ENCODE measurements at regions of chr16 and their contacts with region 1.

Region 1: GRCh38 chr16:58684354-58685083 is at the start of gene SLC38A7:
- DNase-seq: peak; percentile 90 to 92 (median 91)
- ATAC-seq: peak; percentile 92 to 95 (median 94)
- H3K4me3 ChIP-seq: peak within 1 kb of the TSS; percentile 85 to 98 (median 85)
- H3K27ac ChIP-seq: peak within 1 kb of the TSS; percentile 75 to 83 (median 77)
- H3K4me1 ChIP-seq: peaks cover 0 to 11% (median 2%) of the 10 kb centered on the region in 4 donors
- H3K27me3 ChIP-seq: no peaks in the 10 kb centered on the region
- CTCF ChIP-seq: no peak
- POLR2A ChIP-seq: no peak
- total RNA-seq, gene SLC38A7: 11.4 to 23.8 (median 14.3) TPM

Region 2: DNA sequence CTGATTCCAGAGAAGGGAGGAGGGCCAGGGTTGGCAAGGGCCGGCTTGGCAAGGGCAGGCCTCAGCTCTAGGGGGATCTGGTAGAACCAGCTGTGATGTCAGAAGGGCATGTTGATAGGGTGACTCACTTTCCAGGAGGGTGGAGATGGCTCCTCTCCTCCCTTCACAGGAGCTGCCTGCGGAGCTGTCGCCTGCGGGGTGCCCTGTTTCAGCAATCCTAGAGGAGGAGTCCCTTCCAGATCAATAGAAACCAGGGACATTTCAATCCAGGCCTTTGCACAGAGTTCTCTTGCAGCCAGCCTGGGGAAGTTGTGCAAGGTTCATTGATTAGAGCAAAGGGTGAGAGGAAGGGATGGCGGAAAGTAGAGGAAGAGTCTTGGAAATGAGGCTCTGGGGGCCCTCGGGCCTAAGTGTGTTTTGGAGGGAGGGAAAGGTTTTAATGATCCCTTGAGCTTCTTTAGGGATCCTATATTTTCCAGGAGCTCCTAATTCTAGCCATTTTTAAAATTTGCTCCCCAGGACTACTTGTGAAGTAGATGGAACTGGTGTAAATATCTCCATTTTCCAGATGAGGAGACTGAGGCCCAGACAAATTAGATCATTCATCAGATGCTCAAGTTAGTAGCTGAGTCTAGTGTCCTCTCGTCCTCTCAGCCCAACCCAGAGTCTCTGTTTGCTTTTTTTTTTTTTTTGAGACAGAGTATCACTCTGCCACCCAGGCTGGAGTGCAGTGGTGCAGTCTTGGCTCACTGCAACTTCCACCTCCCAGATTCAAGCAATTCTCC is 461.8 kb before region 1 on chr16:
- intact Hi-C with region 1: no loop called
- DNase-seq: peak; percentile 79 to 91 (median 89)
- ATAC-seq: peak; percentile 97 to 98 (median 98)
- H3K4me3 ChIP-seq: no peak overlapping the region
- H3K27ac ChIP-seq: peak overlapping the region in 2 of 3 donors; percentile 52 to 62
- H3K4me1 ChIP-seq: peaks cover 0 to 14% (median 5%) of the 10 kb centered on the region in 4 donors
- H3K27me3 ChIP-seq: no peaks in the 10 kb centered on the region
- CTCF ChIP-seq: no peak
- POLR2A ChIP-seq: peak; percentile 18

Region 3: GRCh38 chr16:58733671-58734458 is 49.3 kb after region 1 on chr16 and contains the start of gene GOT2:
- intact Hi-C with region 1: loop called in 1 of 2 experiments (anchors 10 kb)
- DNase-seq: peak; percentile 86 to 90 (median 88)
- ATAC-seq: peak; percentile 90 to 95 (median 94)
- H3K4me3 ChIP-seq: peak within 1 kb of the TSS; percentile 87 to 96 (median 90)
- H3K27ac ChIP-seq: peak within 1 kb of the TSS; percentile 75 to 97 (median 91)
- H3K4me1 ChIP-seq: peaks cover 0 to 42% (median 21%) of the 10 kb centered on the region in 4 donors
- H3K27me3 ChIP-seq: no peaks in the 10 kb centered on the region
- CTCF ChIP-seq: peak; percentile 75 to 98 (median 98)
- POLR2A ChIP-seq: peak; percentile 70
- total RNA-seq, gene GOT2: 117 to 196 (median 169) TPM